A549 (cell line): ENCODE measurements at regions of chr5 and their contacts with region 1.

Region 1: DNA sequence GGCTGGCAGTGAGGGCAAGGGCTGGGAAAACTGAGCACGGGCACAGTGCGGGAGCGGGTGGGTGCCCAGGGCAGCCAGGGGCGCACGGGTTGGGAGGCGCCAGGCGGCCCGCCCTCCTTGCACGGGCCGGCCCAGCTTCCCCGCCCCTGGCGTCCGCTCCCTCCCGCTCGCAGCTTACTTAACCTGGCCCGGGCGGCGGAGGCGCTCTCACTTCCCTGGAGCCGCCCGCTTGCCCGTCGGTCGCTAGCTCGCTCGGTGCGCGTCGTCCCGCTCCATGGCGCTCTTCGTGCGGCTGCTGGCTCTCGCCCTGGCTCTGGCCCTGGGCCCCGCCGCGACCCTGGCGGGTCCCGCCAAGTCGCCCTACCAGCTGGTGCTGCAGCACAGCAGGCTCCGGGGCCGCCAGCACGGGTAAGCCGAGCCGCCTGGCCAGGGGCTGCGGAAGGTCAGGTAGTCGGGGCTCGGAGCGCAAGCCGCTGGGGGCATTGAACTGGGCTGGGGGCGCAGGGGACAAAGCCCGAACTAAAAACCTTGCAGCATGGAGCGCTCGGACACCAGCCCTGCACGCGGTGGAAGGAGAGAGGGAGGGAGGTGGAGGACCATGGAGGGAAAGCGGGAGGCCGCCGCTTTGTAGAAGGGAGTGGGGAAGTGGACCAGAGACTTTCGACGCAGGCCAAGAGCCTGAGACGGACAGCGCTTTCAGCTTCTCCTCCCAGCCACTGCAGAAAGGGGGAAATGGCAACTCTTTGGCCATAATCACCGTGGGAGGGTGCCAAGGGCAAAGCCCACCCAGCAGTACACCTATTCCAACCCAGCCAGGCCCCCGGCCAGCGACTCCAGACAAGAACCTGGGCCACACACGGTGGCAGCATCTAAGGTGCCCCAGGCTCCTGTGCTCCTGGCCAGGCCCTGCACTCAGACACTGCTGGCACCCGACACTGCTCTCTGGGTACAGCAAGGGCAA is at the start of gene TGFBI:
- DNase-seq: peak; percentile 78 to 83
- ATAC-seq: peak; percentile 89 to 94
- H3K4me3 ChIP-seq: peak within 1 kb of the TSS; percentile 97
- H3K27ac ChIP-seq: peak within 1 kb of the TSS; percentile 99 to 100
- H3K4me1 ChIP-seq: peaks cover 52% of the 10 kb centered on the region
- CTCF ChIP-seq: no peak; the same call in 2 of the 3 replicates
- EP300 ChIP-seq: no peak
- POLR2A ChIP-seq: peak; percentile 98
- RAD21 ChIP-seq: peak in 1 of 2 experiments; percentile 51; a peak in 3 of 5 replicates
- polyA plus RNA-seq, gene TGFBI: 1,135 and 1,466 TPM in 2 replicates

Region 2: GRCh38 chr5:135488727-135489465 is 540.2 kb before region 1 on chr5:
- CTCF ChIA-PET with region 1: no interaction called
- POLR2A ChIA-PET with region 1: no interaction called
- DNase-seq: peak; percentile 53 to 68
- ATAC-seq: peak; percentile 75 to 85
- H3K4me3 ChIP-seq: peak overlapping the region; percentile 38
- H3K27ac ChIP-seq: peak overlapping the region; percentile 37 to 83
- H3K4me1 ChIP-seq: peaks cover 27% of the 10 kb centered on the region
- CTCF ChIP-seq: no peak
- EP300 ChIP-seq: no peak
- POLR2A ChIP-seq: no peak
- RAD21 ChIP-seq: no peak

Region 3: DNA sequence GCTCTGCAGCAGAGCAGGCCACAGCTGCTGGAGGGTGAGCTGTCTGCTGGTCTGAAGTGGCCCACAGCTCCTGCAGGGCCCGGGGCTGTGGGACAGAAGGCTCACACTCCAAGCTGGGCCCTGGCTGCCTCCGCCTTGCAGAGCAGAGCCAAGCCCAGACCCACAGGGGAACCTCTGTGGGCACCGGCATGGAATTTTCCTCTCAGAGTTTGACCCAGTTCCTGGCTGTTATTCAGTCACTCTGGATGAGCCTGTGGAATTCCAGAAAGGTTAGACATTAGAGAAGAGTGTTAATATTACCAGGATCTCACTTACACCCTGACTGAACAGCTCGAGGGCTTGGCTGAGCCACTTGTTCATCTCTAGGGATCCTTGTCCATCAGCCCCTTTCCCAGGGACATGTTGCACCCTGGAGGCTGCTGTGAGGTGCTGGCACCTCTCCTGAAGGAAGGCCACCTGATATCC is 150.9 kb before region 1 on chr5:
- CTCF ChIA-PET with region 1: no interaction called
- POLR2A ChIA-PET with region 1: no interaction called
- DNase-seq: no peak
- ATAC-seq: no peak
- H3K4me3 ChIP-seq: no peak overlapping the region
- H3K27ac ChIP-seq: peak overlapping the region in 1 of 2 experiments; percentile 31; a peak in 1 of 6 replicates
- H3K4me1 ChIP-seq: peaks cover 11% of the 10 kb centered on the region
- CTCF ChIP-seq: no peak
- EP300 ChIP-seq: no peak
- POLR2A ChIP-seq: no peak
- RAD21 ChIP-seq: no peak

Region 4: DNA sequence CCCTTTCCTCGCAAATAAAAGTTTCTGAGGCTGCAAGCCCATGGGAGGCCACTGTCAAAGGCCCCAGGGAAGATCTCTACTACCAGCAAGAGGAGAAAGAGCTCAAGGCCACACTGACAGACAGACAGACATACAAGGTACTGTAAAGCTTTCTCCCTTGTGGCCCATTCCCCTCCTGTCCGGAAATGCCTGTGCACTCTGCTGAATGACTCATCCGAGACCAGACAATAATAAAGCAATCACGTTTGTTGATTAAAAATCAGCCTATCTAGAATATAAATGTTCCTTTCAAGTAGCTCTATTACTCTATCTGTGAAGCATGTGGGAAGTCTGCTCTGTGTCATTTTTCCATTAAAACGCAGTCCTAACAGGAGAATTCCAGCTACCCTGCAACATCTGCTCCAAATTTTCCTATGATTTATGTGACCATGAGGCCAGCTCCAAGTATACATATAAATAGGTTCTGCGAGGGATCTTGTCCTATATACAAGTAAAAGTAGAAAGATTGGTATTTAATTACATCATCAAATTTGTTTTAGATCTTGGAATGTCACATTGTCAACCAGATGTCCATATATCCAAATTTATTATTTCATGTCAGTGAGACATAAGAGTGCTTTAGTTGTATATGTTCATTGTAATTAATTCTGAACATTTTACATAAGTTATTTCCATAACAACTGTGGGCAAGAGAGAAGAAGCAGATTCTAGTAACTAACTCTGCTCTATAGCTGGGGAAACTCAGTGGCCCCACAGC is 35.0 kb before region 1 on chr5:
- CTCF ChIA-PET with region 1: interaction called, 3 read pairs
- POLR2A ChIA-PET with region 1: interaction called, 16 read pairs
- DNase-seq: peak in 1 of 2 experiments; percentile 78
- ATAC-seq: peak; percentile 85 to 87
- H3K4me3 ChIP-seq: peak overlapping the region; percentile 18
- H3K27ac ChIP-seq: peak overlapping the region; percentile 85 to 92
- H3K4me1 ChIP-seq: peaks cover 44% of the 10 kb centered on the region
- CTCF ChIP-seq: no peak
- EP300 ChIP-seq: peak; percentile 37 to 57; a peak in 2 of 5 replicates
- POLR2A ChIP-seq: no peak
- RAD21 ChIP-seq: 0 out of 5 replicates have a peak, but pooled peaks of 1 of the 2 experiments have one; percentile 6

Region 5: DNA sequence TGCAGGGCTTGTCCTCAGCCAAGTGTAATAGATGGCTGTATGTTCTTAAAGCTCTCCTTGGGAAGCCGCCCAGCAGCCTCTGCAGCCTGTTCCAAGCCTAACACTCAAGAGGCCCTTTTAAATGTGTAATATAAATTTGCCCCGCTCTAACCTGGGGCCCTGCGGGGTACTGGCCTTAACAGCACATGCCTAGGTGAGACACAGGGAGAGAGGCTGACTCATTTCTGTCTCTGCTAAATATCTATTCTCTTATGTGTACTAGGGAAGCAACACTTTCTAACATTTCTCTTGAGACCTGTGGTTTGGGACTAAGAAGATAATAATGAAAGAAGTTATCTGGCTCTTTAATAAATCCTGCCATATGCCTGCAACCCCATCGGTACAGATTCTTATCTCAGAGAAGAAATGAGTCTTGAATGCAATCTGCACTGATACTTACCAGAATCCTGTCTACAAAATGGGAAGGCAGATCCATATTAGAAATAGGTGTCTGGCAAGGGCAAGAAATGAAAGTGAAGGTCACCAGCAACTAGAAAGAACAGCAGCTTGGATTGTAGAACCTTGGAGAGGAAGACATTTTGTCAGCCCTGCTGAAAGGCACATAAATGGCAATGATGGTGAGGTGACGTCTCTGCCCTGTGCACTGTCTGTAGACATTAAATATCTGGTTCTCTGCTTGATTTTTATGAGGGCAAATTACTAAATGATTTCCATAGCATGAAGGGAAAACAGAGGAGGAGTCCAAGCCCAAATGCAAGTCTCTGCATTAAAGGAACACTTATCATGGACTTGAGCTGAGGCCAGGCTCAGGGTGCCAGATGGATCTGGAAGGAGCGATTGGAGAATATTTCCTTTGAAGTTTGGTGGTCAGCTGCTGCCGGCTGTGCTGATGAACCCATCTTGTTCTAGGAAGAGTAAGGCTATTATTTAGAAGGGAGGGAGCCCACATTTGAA is 14.7 kb before region 1 on chr5:
- CTCF ChIA-PET with region 1: interaction called, 4 read pairs
- POLR2A ChIA-PET with region 1: interaction called, 39 read pairs
- DNase-seq: no peak
- ATAC-seq: no peak
- H3K4me3 ChIP-seq: no peak overlapping the region
- H3K27ac ChIP-seq: peak overlapping the region; percentile 96 to 97
- H3K4me1 ChIP-seq: peaks cover 83% of the 10 kb centered on the region
- CTCF ChIP-seq: no peak
- EP300 ChIP-seq: no peak
- POLR2A ChIP-seq: no peak
- RAD21 ChIP-seq: no peak

Region 6: GRCh38 chr5:136053336-136054141 is 24.5 kb after region 1 on chr5:
- CTCF ChIA-PET with region 1: interaction called, 79 read pairs
- POLR2A ChIA-PET with region 1: interaction called, 13 read pairs
- DNase-seq: peak; percentile 94 to 95
- ATAC-seq: peak; percentile 54 to 73
- H3K4me3 ChIP-seq: 0 out of 3 replicates have a peak overlapping the region, but pooled peaks have one; percentile 17
- H3K27ac ChIP-seq: peak overlapping the region; percentile 86 to 93
- H3K4me1 ChIP-seq: peaks cover 94% of the 10 kb centered on the region
- CTCF ChIP-seq: no peak
- EP300 ChIP-seq: peak; percentile 91 to 96; a peak in 4 of 5 replicates
- POLR2A ChIP-seq: no peak
- RAD21 ChIP-seq: peak; percentile 22 to 43; a peak in 4 of 5 replicates

Region 7: DNA sequence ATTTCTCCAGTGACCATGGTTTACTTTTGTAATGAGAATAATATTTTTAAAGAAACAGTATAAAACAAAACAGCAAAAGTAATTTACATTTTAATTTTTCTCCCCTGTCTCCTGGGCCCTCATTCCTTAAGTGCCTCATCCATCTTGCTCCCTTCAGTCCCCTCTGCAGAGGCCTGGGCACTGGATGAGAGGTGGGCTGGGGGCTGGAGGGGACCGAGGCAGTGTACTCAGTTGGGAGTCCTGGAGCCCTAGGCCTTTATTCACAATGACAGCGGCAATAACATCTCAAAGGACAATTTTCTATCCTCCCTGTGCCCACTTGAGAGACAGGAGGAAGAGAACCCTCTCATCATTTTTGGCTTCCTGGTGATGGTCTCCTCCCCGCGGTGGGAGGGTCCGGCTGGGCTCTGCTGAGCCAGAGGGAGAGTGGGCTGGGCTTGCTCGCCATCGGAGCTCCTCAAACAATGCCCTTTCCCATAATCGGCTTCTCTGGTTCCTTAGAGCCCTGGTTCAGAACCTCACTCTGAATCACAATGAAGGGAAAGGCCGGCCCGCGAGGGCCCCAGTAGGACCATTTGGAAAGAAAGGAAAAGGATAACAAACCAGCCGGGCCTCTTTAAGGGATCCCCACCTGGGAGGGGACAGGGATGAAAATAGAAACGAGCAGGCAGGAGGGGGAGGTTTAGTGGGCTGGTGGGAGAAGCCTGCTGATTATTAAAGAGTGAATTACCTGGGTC is 173.6 kb after region 1 on chr5:
- CTCF ChIA-PET with region 1: no interaction called
- POLR2A ChIA-PET with region 1: no interaction called
- DNase-seq: no peak
- ATAC-seq: no peak
- H3K4me3 ChIP-seq: no peak overlapping the region
- H3K27ac ChIP-seq: no peak overlapping the region
- H3K4me1 ChIP-seq: no peaks in the 10 kb centered on the region
- CTCF ChIP-seq: no peak
- EP300 ChIP-seq: no peak
- POLR2A ChIP-seq: no peak
- RAD21 ChIP-seq: no peak

Region 8: DNA sequence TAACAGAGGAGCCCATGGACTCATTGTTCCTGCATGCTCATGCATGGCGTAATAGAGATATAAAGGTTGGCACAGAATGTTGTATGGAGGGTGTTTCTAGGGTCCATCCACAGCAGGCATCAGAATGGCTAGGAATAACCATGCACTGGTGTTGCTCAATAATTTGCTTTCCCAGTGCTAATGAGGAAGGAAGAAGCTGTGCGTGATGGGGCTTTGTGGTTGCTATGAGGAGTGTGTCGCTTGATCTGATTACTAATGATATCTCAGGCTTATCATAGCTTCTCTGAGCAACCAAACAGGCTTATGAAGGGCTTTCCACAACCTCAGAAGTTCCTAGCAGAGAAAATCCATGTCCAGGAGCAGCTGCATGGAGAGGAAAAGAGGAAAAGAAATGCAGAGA is 487.6 kb after region 1 on chr5:
- CTCF ChIA-PET with region 1: no interaction called
- POLR2A ChIA-PET with region 1: no interaction called
- DNase-seq: no peak
- ATAC-seq: no peak
- H3K4me3 ChIP-seq: no peak overlapping the region
- H3K27ac ChIP-seq: no peak overlapping the region
- H3K4me1 ChIP-seq: no peaks in the 10 kb centered on the region
- CTCF ChIP-seq: no peak
- EP300 ChIP-seq: no peak
- POLR2A ChIP-seq: no peak
- RAD21 ChIP-seq: no peak